Activated CD4-positive, alpha-beta memory T cell treated with anti-CD3 and anti-CD28 coated beads, Interleukin-2, amount 10 ng/mL, durations not matched to agents 7 days and 5 days (primary cell): ENCODE measurements at regions of chr6 and their contacts with region 1.

Region 1: DNA sequence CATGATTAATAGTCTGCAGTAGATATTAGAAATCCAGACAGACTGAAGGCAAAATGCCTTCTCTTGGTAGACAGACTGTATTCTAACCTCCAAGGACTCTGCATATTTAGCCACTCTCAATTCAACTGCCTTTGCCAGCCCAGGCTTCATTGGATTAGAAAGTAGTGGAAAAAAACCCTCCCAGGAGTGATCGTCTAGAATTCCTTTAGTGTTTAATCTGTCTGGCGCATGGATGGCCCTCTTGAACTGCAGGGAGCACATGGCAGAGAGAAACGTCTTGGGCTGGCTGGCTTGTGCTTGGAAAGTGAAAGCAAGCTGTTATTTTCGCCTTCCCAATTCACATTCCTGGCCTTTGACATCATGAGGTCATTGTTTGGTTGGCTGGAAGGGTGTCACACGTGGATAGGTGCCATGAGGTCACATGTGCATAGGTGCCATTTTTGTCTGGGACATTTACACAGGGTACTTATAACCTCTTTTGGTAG is 30.9 kb upstream of the NEDD9 start:
- DNase-seq: no peak
- H3K4me3 Mint-ChIP-seq: no peak overlapping the region
- H3K27ac Mint-ChIP-seq: no peak overlapping the region
- H3K4me1 Mint-ChIP-seq: peaks cover 41% of the 10 kb centered on the region
- H3K27me3 Mint-ChIP-seq: no peaks in the 10 kb centered on the region

Region 2: GRCh38 chr6:11055127-11055627 is 208.2 kb before region 1 on chr6:
- CTCF ChIA-PET with region 1: no interaction called
- POLR2A ChIA-PET with region 1: no interaction called
- DNase-seq: no peak
- H3K4me3 Mint-ChIP-seq: no peak overlapping the region
- H3K27ac Mint-ChIP-seq: no peak overlapping the region
- H3K4me1 Mint-ChIP-seq: no peaks in the 10 kb centered on the region
- H3K27me3 Mint-ChIP-seq: peaks cover 13% of the 10 kb centered on the region

Region 3: GRCh38 chr6:11093589-11094410 is 169.5 kb before region 1 on chr6 and contains the start of gene SMIM13:
- CTCF ChIA-PET with region 1: no interaction called
- POLR2A ChIA-PET with region 1: no interaction called
- DNase-seq: peak; percentile 97
- H3K4me3 Mint-ChIP-seq: peak within 1 kb of the TSS; percentile 93
- H3K27ac Mint-ChIP-seq: peak within 1 kb of the TSS; percentile 96
- H3K4me1 Mint-ChIP-seq: peaks cover 26% of the 10 kb centered on the region
- H3K27me3 Mint-ChIP-seq: no peaks in the 10 kb centered on the region
- total RNA-seq, gene SMIM13: 9.0 to 9.4 TPM

Region 4: DNA sequence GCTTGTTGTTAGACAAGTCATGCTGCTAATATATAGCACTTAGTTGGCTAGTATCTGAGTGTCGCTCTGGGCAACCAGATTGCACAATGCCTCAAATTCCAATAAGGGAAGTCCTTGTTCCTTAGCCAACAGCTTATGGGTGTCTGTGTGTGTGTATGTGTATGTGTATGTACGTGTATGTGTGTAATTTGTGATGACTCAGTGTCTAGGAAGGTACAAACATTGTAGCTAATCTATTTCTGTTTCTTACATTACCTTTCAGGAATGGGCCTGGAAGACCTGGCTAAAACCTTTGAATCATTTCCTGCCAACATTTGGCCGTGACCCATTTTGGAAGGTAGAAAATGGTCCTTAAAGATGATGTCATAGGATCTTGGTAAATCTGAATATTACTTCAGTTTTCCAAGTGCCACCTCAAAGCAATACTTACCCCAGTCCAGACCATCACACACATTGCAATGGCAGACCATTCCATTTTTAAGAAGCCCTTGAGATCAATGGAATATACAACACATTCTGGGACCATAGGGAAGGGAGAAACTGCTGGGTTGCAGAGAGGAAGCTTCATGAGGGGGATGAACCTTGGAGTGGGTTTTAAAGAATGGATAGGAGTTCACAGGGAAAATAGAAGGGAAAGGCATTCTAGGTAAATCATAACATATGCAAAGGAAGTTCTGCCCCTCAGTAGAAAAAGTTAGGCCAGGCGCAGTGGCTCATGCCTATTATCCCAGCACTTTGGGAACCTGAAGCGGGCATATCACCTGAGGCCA is 55.9 kb before region 1 on chr6:
- CTCF ChIA-PET with region 1: no interaction called
- POLR2A ChIA-PET with region 1: interaction called, 10 read pairs
- DNase-seq: no peak
- H3K4me3 Mint-ChIP-seq: no peak overlapping the region
- H3K27ac Mint-ChIP-seq: no peak overlapping the region
- H3K4me1 Mint-ChIP-seq: peaks cover 57% of the 10 kb centered on the region
- H3K27me3 Mint-ChIP-seq: no peaks in the 10 kb centered on the region

Region 5: DNA sequence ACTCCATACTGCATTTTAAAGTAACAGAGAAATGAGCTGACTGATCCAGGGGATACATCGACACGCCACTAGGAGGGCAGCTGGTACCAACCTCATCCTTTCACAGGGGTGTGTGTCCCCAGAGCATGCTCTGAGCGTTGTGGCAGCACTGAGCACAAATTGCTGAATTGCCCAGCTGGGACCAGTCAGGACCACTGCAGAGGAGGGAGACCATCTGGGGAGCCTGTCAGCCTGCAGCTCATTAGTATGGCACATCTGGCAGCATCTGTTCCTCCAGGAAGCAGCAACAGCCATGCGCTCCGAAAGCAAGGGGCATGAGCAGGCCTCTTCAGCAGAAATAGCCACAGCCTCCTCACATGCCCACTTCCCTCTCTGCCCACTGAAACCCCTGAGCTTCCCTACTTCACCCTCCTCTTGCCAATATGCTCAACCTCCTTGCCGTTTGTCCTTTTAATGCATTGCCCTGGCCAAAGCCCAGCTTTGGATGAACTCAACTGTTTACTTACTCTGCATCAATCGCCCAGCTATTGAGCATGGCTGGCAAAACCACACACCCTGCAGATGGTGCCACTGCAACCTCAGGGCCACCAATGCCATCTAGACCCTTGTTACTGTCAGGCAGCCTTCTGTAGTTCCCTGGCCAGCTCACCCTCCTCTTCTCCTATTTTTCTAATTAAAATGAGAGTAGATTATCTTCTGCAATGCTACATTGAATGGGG is 46.8 kb after region 1 on chr6:
- CTCF ChIA-PET with region 1: no interaction called
- POLR2A ChIA-PET with region 1: no interaction called
- DNase-seq: no peak
- H3K4me3 Mint-ChIP-seq: no peak overlapping the region
- H3K27ac Mint-ChIP-seq: no peak overlapping the region
- H3K4me1 Mint-ChIP-seq: peaks cover 15% of the 10 kb centered on the region
- H3K27me3 Mint-ChIP-seq: no peaks in the 10 kb centered on the region

Region 6: DNA sequence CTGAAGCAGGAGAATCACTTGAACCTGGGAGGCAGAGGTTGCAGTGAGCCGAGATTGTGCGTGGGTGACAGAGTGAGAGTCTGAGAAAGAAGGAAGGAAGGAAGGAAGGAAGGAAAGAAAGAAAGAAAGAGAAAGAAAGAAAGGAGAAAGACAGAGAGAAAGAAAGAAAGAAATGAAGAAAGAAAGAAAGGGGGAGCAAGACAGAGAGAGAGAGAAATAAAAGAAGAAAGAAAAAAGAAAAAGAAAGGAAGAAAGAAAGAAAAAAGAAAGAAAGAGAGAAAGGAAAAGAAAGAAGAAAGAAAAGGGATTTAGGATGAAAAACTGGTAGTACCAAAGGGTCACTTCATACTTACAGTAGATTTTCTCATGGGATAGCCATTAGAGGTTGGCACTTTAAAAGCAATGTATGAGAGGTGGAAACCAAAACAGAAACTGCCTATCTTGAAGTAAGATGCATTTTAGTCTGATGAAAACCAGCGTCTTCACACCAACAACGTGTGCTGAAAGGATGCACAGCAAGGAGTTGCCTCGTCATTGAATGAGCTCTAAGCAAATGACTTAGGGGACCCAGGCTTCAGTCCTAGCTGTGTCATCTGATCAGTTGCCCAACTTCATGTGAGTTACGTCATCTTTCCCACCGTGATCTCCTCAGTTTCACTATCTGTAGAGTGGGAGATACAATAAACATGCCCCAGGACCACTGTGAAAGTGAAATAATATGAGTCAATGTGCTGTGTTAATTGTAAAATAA is 103.0 kb after region 1 on chr6:
- CTCF ChIA-PET with region 1: no interaction called
- POLR2A ChIA-PET with region 1: interaction called, 12 read pairs
- DNase-seq: peak; percentile 64
- H3K4me3 Mint-ChIP-seq: peak overlapping the region; percentile 12
- H3K27ac Mint-ChIP-seq: peak overlapping the region; percentile 62
- H3K4me1 Mint-ChIP-seq: peaks cover 74% of the 10 kb centered on the region
- H3K27me3 Mint-ChIP-seq: no peaks in the 10 kb centered on the region

Region 7: GRCh38 chr6:11414176-11414963 is 151.0 kb after region 1 on chr6:
- CTCF ChIA-PET with region 1: no interaction called
- POLR2A ChIA-PET with region 1: interaction called, 35 read pairs
- DNase-seq: peak; percentile 76
- H3K4me3 Mint-ChIP-seq: peak overlapping the region; percentile 8
- H3K27ac Mint-ChIP-seq: peak overlapping the region; percentile 59
- H3K4me1 Mint-ChIP-seq: peaks cover 55% of the 10 kb centered on the region
- H3K27me3 Mint-ChIP-seq: no peaks in the 10 kb centered on the region